ENCODE measurements at regions of chr19 and their contacts with region 1.

Region 1: DNA sequence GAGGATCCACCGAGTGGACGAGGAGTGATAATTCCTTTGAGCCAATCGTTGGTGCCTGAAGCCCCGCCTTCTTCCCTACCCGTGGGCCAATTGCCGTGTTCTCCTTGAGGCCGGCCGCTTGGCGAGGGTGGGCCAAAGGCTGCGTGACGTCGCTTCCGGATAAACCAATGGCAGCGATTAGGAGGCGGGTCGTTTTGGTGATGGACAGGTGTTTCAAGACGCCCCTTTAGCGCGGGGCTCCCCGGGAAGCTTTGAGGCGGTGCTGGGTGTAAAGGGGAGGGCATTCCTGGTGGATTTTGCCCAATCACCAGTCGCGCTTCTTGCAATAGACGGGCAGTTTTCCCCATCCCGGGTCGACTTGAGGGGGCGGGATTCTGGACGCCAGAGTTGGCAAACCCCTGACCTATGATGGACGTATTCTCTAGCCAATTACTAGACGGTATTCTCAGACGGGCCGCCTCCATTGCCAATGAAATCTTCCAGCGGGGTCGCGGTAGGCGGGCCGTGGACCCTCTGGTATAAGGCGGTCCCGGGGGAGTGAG is 310 bp upstream of the PRMT1 start:
- DNase-seq: peak; percentile 100
- H3K4me3 ChIP-seq: peak overlapping the region; percentile 62 to 94 (median 84)
- H3K27ac ChIP-seq: peak overlapping the region; percentile 85 to 99 (median 95)
- H3K4me1 ChIP-seq: peaks cover 9 to 50% (median 43%) of the 10 kb centered on the region in 4 donors
- H3K27me3 ChIP-seq: no peaks in the 10 kb centered on the region
- CTCF ChIP-seq: no peak
- EP300 ChIP-seq: no peak
- POLR2A ChIP-seq: no peak

Region 2: GRCh38 chr19:49473868-49474544 is 202.8 kb before region 1 on chr19 and contains the start of gene FLT3LG:
- in situ Hi-C with region 1: no loop called
- intact Hi-C with region 1: loop called (anchors 10 kb)
- DNase-seq: peak; percentile 83
- H3K4me3 ChIP-seq: peak within 1 kb of the TSS; percentile 68 to 81 (median 73)
- H3K27ac ChIP-seq: peak within 1 kb of the TSS; percentile 83 to 89 (median 86)
- H3K4me1 ChIP-seq: peaks cover 8 to 35% (median 13%) of the 10 kb centered on the region in 4 donors
- H3K27me3 ChIP-seq: no peaks in the 10 kb centered on the region
- CTCF ChIP-seq: peak; percentile 98 to 100 (median 99)
- EP300 ChIP-seq: peak; percentile 12
- POLR2A ChIP-seq: peak; percentile 24
- total RNA-seq, gene FLT3LG: 1.00 to 4.0 (median 3.2) TPM in 3 of 4 donors, not detected in the other

Region 3: DNA sequence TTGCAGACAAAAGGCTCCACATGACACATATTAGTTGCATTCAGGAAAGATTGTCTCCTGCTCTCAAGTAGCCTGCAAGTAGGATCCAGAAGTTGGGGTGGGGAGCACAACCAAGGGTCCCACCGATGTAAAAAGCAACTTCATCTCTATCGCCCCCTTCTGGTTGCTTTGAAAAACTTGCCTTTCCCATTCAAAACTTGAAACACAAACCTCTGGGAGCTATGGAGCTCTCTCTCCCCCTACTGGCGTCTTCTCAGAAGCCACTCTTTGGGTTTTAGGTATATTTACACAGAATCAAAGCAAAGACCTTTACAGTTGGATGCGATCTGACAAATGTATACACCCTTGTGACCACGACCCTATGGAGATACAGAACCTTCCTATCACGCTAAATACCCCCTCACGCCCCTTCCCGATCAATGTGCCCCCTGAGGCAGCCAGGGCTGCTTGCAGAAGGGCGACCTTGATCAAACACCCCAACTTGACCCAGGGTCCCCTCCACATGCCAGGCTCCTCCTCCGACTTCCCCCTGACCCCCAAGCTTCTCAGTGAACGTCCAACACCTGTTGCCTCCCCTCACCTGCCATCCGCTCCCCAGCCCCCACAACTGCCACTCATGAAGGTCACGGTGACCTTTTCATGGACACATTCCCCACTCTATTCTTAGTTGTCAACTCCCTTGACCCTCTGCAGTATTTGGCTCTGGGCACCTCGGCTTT is 106.5 kb before region 1 on chr19:
- in situ Hi-C with region 1: loop called in 1 of 4 experiments (anchors 10 kb)
- intact Hi-C with region 1: no loop called
- DNase-seq: peak; percentile 73
- H3K4me3 ChIP-seq: no peak overlapping the region
- H3K27ac ChIP-seq: peak overlapping the region; percentile 77 to 92 (median 82)
- H3K4me1 ChIP-seq: peaks cover 17 to 66% (median 53%) of the 10 kb centered on the region in 4 donors
- H3K27me3 ChIP-seq: no peaks in the 10 kb centered on the region
- CTCF ChIP-seq: peak; percentile 95 to 100 (median 99)
- EP300 ChIP-seq: no peak
- POLR2A ChIP-seq: no peak

Region 4: DNA sequence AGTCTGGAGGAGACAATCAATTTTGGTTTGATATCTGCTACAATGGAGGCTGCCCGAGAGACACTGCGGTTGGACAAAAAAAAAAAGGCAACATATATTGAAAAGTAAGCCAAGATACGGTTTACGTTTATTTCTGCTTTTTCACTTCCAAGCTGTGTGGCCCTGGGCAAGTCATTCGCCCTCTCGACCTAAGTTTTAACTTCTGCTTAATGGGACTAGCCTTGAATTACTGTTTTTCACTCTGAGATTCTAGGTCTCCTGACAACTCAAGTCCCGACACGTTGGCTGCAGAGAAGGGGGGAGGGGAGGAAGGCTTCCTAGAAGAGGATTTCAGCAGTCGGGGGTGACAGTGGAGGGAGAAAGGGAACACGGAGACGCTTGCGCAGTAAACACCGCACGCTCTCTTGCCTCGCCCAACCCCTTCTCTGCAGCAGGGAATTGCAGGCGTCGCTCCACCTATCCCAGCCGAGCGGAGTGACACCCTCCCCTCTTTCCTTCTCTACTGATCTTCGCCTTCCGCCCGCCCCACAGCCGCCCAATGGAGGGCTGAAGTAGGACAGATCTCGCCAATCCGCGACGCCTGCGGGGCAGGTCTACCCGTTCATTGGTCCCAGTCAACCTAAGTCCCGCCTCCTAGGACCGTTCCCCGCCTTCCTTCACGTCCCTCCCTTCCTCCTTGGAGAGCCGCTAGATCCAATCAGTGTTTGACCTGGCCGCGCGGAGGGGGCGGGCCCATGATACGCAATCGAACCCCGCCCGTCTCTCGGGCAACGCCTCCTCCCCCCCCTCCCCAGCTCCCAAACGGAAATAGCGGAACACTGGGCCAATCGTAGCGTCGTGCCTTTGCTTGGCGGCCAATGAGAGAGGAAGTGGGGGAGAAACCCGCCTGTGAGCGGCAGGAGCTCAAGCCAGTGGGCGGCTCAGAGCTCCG is 89.5 kb after region 1 on chr19:
- in situ Hi-C with region 1: no loop called
- intact Hi-C with region 1: no loop called
- DNase-seq: peak; percentile 99
- H3K4me3 ChIP-seq: peak overlapping the region; percentile 22 to 92 (median 84)
- H3K27ac ChIP-seq: peak overlapping the region; percentile 87 to 96 (median 94)
- H3K4me1 ChIP-seq: peaks cover 13 to 27% (median 22%) of the 10 kb centered on the region in 4 donors
- H3K27me3 ChIP-seq: no peaks in the 10 kb centered on the region
- CTCF ChIP-seq: no peak
- EP300 ChIP-seq: no peak
- POLR2A ChIP-seq: peak; percentile 73

Region 5: DNA sequence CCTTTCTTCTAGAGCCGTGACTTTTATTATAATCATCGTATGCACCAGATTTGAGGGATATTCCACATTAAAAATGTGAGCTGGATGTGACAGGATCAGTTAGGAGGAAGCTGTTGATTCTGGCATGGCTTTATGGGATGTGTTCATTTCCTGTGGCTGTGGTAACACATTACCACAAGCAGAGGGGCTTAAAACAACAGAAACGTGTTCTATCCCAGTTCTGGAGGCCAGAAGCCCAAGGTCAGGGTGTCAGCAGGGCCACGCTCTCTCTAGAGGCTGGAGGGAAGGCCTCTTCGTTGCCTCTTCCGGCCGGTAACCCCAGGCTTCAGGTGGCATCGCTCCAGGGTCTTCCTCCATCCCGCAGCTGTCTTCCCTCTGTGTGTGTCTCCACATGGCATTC is 155.8 kb after region 1 on chr19:
- in situ Hi-C with region 1: no loop called
- intact Hi-C with region 1: no loop called
- DNase-seq: no peak
- H3K4me3 ChIP-seq: no peak overlapping the region
- H3K27ac ChIP-seq: no peak overlapping the region
- H3K4me1 ChIP-seq: no peaks in the 10 kb centered on the region
- H3K27me3 ChIP-seq: no peaks in the 10 kb centered on the region
- CTCF ChIP-seq: no peak
- EP300 ChIP-seq: no peak
- POLR2A ChIP-seq: no peak

Region 6: GRCh38 chr19:49983645-49984229 is 307.0 kb after region 1 on chr19:
- in situ Hi-C with region 1: no loop called
- intact Hi-C with region 1: no loop called
- DNase-seq: peak; percentile 68
- H3K4me3 ChIP-seq: no peak overlapping the region
- H3K27ac ChIP-seq: no peak overlapping the region
- H3K4me1 ChIP-seq: no peaks in the 10 kb centered on the region
- H3K27me3 ChIP-seq: no peaks in the 10 kb centered on the region
- CTCF ChIP-seq: peak; percentile 84 to 90 (median 90)
- EP300 ChIP-seq: no peak
- POLR2A ChIP-seq: no peak

Region 7: GRCh38 chr19:50030225-50030624 is 353.5 kb after region 1 on chr19:
- in situ Hi-C with region 1: no loop called
- intact Hi-C with region 1: no loop called
- DNase-seq: no peak
- H3K4me3 ChIP-seq: no peak overlapping the region
- H3K27ac ChIP-seq: no peak overlapping the region
- H3K4me1 ChIP-seq: peaks cover 7 to 19% (median 13%) of the 10 kb centered on the region in 4 donors
- H3K27me3 ChIP-seq: no peaks in the 10 kb centered on the region
- CTCF ChIP-seq: no peak
- EP300 ChIP-seq: no peak
- POLR2A ChIP-seq: no peak

Measured in transverse colon (tissue), 4 donors.